ENCODE measurements at regions of chr19 and their contacts with region 1.

Region 1: GRCh38 chr19:18846862-18847548 is 15.2 kb downstream of the UPF1 start:
- DNase-seq: peak; percentile 65 to 83
- ATAC-seq: peak; percentile 83 to 88 (median 83)
- H3K4me3 ChIP-seq: no peak overlapping the region
- H3K4me3 Mint-ChIP-seq: no peak overlapping the region
- H3K27ac ChIP-seq: no peak overlapping the region
- H3K27ac Mint-ChIP-seq: peak overlapping the region; percentile 75 to 81
- H3K4me1 ChIP-seq: peaks cover 68% of the 10 kb centered on the region
- H3K4me1 Mint-ChIP-seq: peaks cover 58 to 74% of the 10 kb centered on the region in 2 donors
- H3K27me3 ChIP-seq: no peaks in the 10 kb centered on the region
- H3K27me3 Mint-ChIP-seq: no peaks in the 10 kb centered on the region
- CTCF ChIP-seq: peak; percentile 79

Region 2: GRCh38 chr19:18450931-18451845 is 395.8 kb before region 1 on chr19:
- intact Hi-C with region 1: loop called (anchors 1 kb)
- DNase-seq: peak; percentile 87 to 93
- ATAC-seq: peak; percentile 89 to 95 (median 91)
- H3K4me3 ChIP-seq: no peak overlapping the region
- H3K4me3 Mint-ChIP-seq: peak overlapping the region; percentile 6
- H3K27ac ChIP-seq: no peak overlapping the region
- H3K27ac Mint-ChIP-seq: peak overlapping the region; percentile 51 to 64
- H3K4me1 ChIP-seq: peaks cover 8% of the 10 kb centered on the region
- H3K4me1 Mint-ChIP-seq: peaks cover 7 to 23% of the 10 kb centered on the region in 2 donors
- H3K27me3 ChIP-seq: no peaks in the 10 kb centered on the region
- H3K27me3 Mint-ChIP-seq: no peaks in the 10 kb centered on the region
- CTCF ChIP-seq: peak; percentile 95

Region 3: GRCh38 chr19:18469069-18469846 is 377.7 kb before region 1 on chr19:
- intact Hi-C with region 1: loop called (anchors 5 kb)
- DNase-seq: peak; percentile 66 to 82
- ATAC-seq: peak; percentile 49 to 56 (median 51)
- H3K4me3 ChIP-seq: no peak overlapping the region
- H3K4me3 Mint-ChIP-seq: no peak overlapping the region
- H3K27ac ChIP-seq: no peak overlapping the region
- H3K27ac Mint-ChIP-seq: peak overlapping the region; percentile 70 to 73
- H3K4me1 ChIP-seq: peaks cover 38% of the 10 kb centered on the region
- H3K4me1 Mint-ChIP-seq: peaks cover 24 to 50% of the 10 kb centered on the region in 2 donors
- H3K27me3 ChIP-seq: no peaks in the 10 kb centered on the region
- H3K27me3 Mint-ChIP-seq: no peaks in the 10 kb centered on the region
- CTCF ChIP-seq: peak; percentile 54

Region 4: DNA sequence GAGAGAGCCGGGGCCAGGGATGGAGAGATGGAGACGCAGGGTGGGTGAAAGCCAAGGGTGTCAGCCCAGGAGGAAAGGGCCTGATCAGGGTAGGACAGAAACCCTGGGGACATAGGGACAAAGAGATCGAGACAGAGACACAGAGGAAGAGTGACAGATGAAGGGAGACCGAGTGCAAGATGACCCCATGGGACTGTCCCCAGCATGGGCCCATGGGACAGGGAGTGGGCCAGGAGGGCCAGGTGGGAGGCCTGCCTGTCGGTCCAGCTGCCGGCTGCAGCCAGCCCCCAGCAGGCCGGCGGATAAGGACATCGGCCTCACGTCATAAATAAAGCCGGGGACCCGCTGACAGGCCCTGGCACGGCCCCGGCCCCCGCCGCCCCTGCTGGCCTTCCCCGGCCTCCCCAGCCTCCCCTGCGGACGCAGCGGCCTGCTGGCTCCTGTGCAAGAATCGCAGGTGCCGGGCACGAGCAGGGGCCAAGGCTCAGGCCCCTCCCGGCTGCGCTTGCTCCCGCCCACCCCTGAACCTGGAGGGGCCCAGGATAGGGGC is 252.1 kb before region 1 on chr19:
- intact Hi-C with region 1: loop called (anchors 1 kb)
- DNase-seq: no peak
- ATAC-seq: no peak
- H3K4me3 ChIP-seq: peak overlapping the region; percentile 44
- H3K4me3 Mint-ChIP-seq: peak overlapping the region; percentile 88
- H3K27ac ChIP-seq: peak overlapping the region; percentile 25
- H3K27ac Mint-ChIP-seq: peak overlapping the region in 1 of 2 donors; percentile 62
- H3K4me1 ChIP-seq: peaks cover 36% of the 10 kb centered on the region
- H3K4me1 Mint-ChIP-seq: peaks cover 5 to 30% of the 10 kb centered on the region in 2 donors
- H3K27me3 ChIP-seq: peaks cover 11% of the 10 kb centered on the region
- H3K27me3 Mint-ChIP-seq: no peaks in the 10 kb centered on the region
- CTCF ChIP-seq: no peak

Region 5: GRCh38 chr19:18906605-18907519 is 59.9 kb after region 1 on chr19:
- intact Hi-C with region 1: no loop called
- DNase-seq: no peak
- ATAC-seq: peak in 1 of 3 donors; percentile 9
- H3K4me3 ChIP-seq: no peak overlapping the region
- H3K4me3 Mint-ChIP-seq: no peak overlapping the region
- H3K27ac ChIP-seq: no peak overlapping the region
- H3K27ac Mint-ChIP-seq: no peak overlapping the region
- H3K4me1 ChIP-seq: no peaks in the 10 kb centered on the region
- H3K4me1 Mint-ChIP-seq: peaks cover 0 to 5% of the 10 kb centered on the region in 2 donors
- H3K27me3 ChIP-seq: no peaks in the 10 kb centered on the region
- H3K27me3 Mint-ChIP-seq: no peaks in the 10 kb centered on the region
- CTCF ChIP-seq: no peak

Measured in natural killer cell (primary cell).